ENCODE measurements at regions of chr13 and their contacts with region 1.

Region 1: DNA sequence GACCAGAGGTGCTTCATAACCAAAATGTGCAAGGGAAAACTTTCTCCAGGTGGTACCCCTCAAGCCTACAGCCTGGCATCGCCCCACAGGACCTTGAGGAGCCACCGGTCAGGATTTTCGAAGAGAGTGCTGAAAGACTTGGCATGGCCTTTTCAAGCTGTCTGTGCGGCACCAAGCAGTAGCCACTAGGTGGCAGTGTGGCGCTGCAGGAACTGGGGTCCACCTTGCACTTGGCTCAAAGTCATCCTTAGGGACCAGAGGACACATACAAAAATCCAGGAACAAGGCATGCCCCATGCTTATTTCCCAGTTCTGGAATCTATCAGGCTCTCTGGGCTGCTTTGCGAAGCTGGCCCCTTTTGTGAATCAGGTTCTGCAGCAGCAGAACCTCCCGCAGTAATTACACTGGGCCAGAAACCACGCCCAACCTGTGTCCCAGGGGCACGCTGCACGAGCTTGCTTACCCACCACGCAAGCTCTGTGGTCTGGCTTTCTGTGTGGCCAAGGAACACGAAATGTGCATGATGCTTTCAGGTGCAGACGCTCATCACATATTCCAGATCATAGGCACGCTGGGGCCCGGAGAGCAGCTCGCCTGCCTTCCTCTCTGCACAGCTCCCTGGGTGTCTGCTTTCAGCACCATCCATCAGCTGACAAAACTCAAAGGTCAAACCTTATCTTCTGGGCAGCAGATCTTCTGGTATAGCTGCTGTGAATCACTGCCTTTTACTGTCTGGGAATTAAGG is 87.2 kb downstream of the SLC7A1 start:
- DNase-seq: peak; percentile 79
- ATAC-seq: peak; percentile 87
- H3K4me3 ChIP-seq: no peak overlapping the region
- H3K27ac ChIP-seq: no peak overlapping the region
- H3K4me1 ChIP-seq: peaks cover 2% of the 10 kb centered on the region
- H3K27me3 ChIP-seq: no peaks in the 10 kb centered on the region
- CTCF ChIP-seq: peak; percentile 94
- POLR2A ChIP-seq: no peak
- RAD21 ChIP-seq: peak; percentile 93

Region 2: DNA sequence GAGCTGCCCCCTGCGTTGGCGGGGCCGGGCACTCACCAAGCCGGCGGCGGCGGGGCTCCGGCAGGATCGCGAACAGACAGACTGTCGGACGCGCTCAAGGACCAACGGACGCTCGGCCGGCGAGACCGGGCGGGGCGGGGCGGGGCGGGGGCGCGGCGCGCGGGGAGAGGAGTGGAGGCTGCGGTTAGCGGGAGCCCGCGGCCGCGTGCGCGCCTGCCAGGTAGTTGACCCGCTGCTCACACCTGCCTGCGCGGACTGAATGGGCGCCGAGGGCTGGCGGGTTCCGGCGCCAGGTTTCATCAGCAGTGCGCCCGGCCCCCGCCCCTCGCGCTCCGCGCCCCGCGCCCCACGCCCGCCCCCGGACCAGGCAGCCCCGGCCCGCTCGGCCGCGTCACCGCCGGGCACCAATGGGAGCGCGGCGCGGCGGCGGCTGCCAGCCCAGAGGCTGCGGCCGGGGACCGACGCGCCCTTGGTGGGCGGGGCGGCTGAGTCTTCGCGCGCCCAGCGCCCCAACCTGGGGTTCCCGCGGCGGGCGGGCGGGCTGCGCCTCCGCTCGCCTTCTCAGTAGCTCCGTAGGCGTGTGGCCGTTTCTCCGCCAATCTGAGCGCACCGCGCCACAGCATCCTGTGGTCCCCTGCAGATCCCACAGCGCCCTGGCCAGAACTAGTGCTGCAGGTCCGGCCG is 87.2 kb after region 1 on chr13 and contains the start of gene SLC7A1:
- CTCF ChIA-PET with region 1: no interaction called
- POLR2A ChIA-PET with region 1: no interaction called
- dilution Hi-C with region 1: no loop called
- in situ Hi-C with region 1: no loop called
- intact Hi-C with region 1: loop called (anchors 1 kb)
- DNase-seq: peak; percentile 80
- ATAC-seq: peak; percentile 96
- H3K4me3 ChIP-seq: peak within 1 kb of the TSS; percentile 85
- H3K27ac ChIP-seq: peak within 1 kb of the TSS; percentile 52
- H3K4me1 ChIP-seq: peaks cover 8% of the 10 kb centered on the region
- H3K27me3 ChIP-seq: no peaks in the 10 kb centered on the region
- CTCF ChIP-seq: 0 out of 2 replicates have a peak, but pooled peaks have one; percentile 12
- POLR2A ChIP-seq: peak; percentile 43; the same call in 1 of the 2 replicates
- RAD21 ChIP-seq: no peak; the same call in 1 of the 2 replicates
- total RNA-seq, gene SLC7A1: 9.7 and 10.3 TPM in 2 replicates

Region 3: DNA sequence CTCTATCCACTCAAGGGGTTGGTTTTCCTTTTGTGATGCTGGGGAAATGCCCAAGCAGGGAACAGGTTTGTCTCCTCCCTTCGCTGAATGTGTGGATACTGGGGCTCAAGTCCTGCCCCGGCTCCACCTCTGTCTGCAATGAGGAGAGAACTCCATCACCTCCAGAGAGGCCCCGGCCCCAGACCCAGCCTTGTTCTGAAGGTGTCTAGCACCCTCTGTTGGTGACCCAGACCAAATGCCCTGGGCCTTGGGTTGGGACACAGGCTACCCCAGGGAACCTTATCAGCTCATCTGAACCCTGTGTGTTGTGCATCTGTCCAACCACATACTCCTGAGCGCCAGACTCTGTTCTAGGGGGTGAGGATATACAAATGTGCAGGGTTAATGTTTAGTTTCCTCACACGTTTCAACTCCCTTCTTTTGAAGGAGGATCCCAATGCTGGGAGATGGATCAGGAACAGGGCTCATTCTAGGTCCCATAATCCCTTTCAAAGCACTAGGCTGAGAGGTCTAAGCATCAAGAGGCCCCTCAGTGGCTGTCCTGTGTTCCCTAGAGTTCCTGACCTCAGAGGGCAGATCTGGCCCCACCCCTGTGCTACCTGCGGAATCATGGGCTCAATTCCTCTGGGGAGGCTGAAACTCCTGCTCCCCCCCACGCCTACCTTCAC is 199.7 kb after region 1 on chr13:
- CTCF ChIA-PET with region 1: interaction called, 11 read pairs
- POLR2A ChIA-PET with region 1: no interaction called
- dilution Hi-C with region 1: no loop called
- in situ Hi-C with region 1: loop called (anchors 5 kb)
- intact Hi-C with region 1: loop called (anchors 1 kb)
- DNase-seq: peak; percentile 41
- ATAC-seq: peak; percentile 94
- H3K4me3 ChIP-seq: no peak overlapping the region
- H3K27ac ChIP-seq: no peak overlapping the region
- H3K4me1 ChIP-seq: no peaks in the 10 kb centered on the region
- H3K27me3 ChIP-seq: peaks cover 32% of the 10 kb centered on the region
- CTCF ChIP-seq: peak; percentile 82
- POLR2A ChIP-seq: no peak
- RAD21 ChIP-seq: peak; percentile 90

Region 4: GRCh38 chr13:29763436-29764180 is 255.3 kb after region 1 on chr13:
- CTCF ChIA-PET with region 1: no interaction called
- POLR2A ChIA-PET with region 1: no interaction called
- dilution Hi-C with region 1: no loop called
- in situ Hi-C with region 1: no loop called
- intact Hi-C with region 1: loop called (anchors 2 kb)
- DNase-seq: no peak
- ATAC-seq: no peak
- H3K4me3 ChIP-seq: no peak overlapping the region
- H3K27ac ChIP-seq: no peak overlapping the region
- H3K4me1 ChIP-seq: 0 out of 2 replicates have a peak, but pooled peaks cover 2% of the 10 kb centered on the region
- H3K27me3 ChIP-seq: no peaks in the 10 kb centered on the region
- CTCF ChIP-seq: no peak
- POLR2A ChIP-seq: no peak
- RAD21 ChIP-seq: no peak

Region 5: DNA sequence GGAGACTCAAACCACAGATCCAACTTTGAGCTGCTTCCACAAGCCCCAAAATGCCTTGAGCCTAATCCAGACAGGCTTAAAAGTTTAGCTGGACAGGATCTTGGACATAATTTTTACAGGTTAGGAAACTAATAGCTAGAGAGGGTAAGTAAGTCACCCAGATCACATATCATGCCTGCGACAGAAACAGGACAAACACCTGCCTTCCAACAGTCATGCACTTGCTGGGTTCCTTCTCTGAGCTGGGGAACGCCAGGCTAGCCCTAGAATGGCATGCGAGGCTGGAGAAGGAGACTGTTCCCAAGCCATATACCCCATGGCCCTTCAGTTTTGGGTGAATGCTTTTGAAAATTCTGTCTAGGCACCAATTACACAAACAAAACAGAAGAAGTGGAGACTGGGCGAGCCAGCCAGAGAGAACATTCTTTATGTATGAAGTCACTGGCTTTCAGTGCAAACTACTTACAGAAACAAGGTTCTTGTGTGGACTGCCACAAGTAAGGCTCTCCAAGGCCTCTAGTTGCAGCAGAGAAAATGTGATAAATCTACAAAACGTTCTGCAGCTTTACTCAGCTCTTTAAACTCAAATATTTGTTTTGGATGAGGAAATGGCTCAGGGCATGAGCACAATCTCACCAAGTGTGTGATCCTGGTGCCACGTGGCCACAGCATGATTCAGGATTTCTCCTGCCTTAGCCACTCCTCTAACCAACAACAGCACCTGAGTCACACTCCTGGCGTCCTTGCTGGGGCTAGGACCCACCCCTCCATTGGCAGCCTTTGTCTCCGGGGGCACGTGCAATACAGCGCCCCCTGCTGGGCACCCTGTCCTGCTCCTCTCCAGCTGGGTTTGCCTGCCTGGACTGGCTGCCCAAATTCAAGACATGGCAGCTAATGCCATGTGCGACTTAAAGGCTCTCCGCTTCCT is 415.5 kb after region 1 on chr13:
- CTCF ChIA-PET with region 1: no interaction called
- POLR2A ChIA-PET with region 1: no interaction called
- dilution Hi-C with region 1: no loop called
- in situ Hi-C with region 1: no loop called
- intact Hi-C with region 1: loop called (anchors 5 kb)
- DNase-seq: peak; percentile 99
- ATAC-seq: peak; percentile 83
- H3K4me3 ChIP-seq: no peak overlapping the region
- H3K27ac ChIP-seq: peak overlapping the region; percentile 77
- H3K4me1 ChIP-seq: peaks cover 27% of the 10 kb centered on the region
- H3K27me3 ChIP-seq: no peaks in the 10 kb centered on the region
- CTCF ChIP-seq: peak; percentile 80
- POLR2A ChIP-seq: no peak
- RAD21 ChIP-seq: peak; percentile 70

Measured in IMR-90 (cell line).